Activated CD4-positive, alpha-beta T cell treated with anti-CD3 and anti-CD28 coated beads, Interleukin-2, amount 10 ng/mL, durations not matched to agents 7 days and 5 days (primary cell): ENCODE measurements at regions of chr16 and their contacts with region 1.

Region 1: GRCh38 chr16:20904507-20905079 is 4.0 kb downstream of the LYRM1 start:
- DNase-seq: peak; percentile 51
- H3K4me3 Mint-ChIP-seq: peak overlapping the region; percentile 23
- H3K27ac Mint-ChIP-seq: peak overlapping the region; percentile 76
- H3K4me1 Mint-ChIP-seq: peaks cover 60% of the 10 kb centered on the region
- H3K27me3 Mint-ChIP-seq: peaks cover 2% of the 10 kb centered on the region

Region 2: GRCh38 chr16:20918486-20919239 is 14.1 kb after region 1 on chr16:
- CTCF ChIA-PET with region 1: interaction called, 11 read pairs
- POLR2A ChIA-PET with region 1: no interaction called
- DNase-seq: no peak
- H3K4me3 Mint-ChIP-seq: no peak overlapping the region
- H3K27ac Mint-ChIP-seq: no peak overlapping the region
- H3K4me1 Mint-ChIP-seq: peaks cover 19% of the 10 kb centered on the region
- H3K27me3 Mint-ChIP-seq: no peaks in the 10 kb centered on the region

Region 3: GRCh38 chr16:20956319-20956718 is 51.7 kb after region 1 on chr16:
- CTCF ChIA-PET with region 1: no interaction called
- POLR2A ChIA-PET with region 1: no interaction called
- DNase-seq: no peak
- H3K4me3 Mint-ChIP-seq: no peak overlapping the region
- H3K27ac Mint-ChIP-seq: no peak overlapping the region
- H3K4me1 Mint-ChIP-seq: no peaks in the 10 kb centered on the region
- H3K27me3 Mint-ChIP-seq: peaks cover 9% of the 10 kb centered on the region

Region 4: DNA sequence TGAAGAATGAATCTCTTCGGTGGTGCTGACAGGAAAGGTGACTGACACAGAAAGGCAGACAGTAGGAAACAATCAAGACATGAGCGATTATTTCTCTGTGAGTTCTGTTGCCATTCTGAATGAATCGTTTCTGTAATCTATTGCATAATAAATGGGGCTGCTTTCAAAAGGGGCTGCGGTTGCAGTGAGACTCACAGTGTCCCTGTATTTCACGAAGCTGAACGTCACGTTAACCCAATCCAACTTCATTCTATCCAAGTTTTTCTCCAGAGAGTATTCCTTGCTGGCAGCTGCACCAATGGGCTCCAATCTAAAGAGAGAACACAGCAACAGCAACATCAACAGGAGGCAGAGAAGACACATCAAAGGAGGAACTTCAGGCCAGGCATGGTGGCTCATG is 170.7 kb after region 1 on chr16:
- CTCF ChIA-PET with region 1: no interaction called
- POLR2A ChIA-PET with region 1: no interaction called
- DNase-seq: no peak
- H3K4me3 Mint-ChIP-seq: no peak overlapping the region
- H3K27ac Mint-ChIP-seq: no peak overlapping the region
- H3K4me1 Mint-ChIP-seq: no peaks in the 10 kb centered on the region
- H3K27me3 Mint-ChIP-seq: no peaks in the 10 kb centered on the region